Activated CD8-positive, alpha-beta T cell treated with anti-CD3 and anti-CD28 coated beads for 36 hours (primary cell): ENCODE measurements at regions of chr19 and their contacts with region 1.

Region 1: DNA sequence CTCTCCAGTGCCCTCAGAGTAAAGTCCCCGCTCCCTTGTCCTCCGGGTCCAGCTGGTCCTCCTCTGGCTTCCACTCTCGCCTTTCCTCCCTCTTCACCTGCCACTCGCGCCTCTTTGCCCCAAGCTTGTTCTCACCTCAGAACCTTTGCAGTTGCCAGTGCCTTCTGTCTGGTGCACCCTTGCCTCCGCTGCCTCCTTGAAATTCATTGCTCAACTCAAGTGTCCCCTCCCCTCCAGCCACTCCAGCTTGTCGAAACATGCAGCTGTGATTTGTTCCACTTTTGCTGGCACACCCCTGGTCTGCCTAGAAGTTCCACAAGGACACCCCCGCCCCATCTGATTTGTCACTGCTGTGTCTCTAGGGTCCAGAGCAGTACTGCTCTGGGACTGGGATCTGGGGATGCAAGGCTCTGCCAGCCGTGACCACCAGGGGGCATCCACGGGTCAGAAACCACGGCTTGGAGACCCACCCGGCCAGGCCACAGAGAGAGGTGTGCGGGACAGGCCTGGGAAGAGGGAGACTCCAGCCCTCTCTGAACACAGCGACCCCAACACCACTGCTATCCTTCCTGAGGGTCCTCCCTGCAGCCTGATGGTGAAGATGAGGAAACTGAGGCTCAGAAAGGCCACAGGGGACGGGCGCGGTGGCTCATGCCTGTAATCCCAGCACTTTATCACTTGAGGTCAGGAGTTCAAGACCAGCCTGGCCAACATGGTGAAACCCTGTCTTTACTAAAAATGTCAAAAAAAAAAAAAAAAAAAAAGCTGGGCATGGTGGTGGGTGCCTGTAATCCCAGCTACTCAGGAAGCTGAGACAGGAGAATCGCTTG is 49.9 kb downstream of the AP1M1 start:
- DNase-seq: peak; percentile 88
- ATAC-seq: peak; percentile 93
- H3K4me3 Mint-ChIP-seq: no peak overlapping the region
- H3K27ac Mint-ChIP-seq: no peak overlapping the region
- H3K4me1 Mint-ChIP-seq: peaks cover 15% of the 10 kb centered on the region
- H3K27me3 Mint-ChIP-seq: no peaks in the 10 kb centered on the region
- CTCF ChIP-seq: peak; percentile 93

Region 2: DNA sequence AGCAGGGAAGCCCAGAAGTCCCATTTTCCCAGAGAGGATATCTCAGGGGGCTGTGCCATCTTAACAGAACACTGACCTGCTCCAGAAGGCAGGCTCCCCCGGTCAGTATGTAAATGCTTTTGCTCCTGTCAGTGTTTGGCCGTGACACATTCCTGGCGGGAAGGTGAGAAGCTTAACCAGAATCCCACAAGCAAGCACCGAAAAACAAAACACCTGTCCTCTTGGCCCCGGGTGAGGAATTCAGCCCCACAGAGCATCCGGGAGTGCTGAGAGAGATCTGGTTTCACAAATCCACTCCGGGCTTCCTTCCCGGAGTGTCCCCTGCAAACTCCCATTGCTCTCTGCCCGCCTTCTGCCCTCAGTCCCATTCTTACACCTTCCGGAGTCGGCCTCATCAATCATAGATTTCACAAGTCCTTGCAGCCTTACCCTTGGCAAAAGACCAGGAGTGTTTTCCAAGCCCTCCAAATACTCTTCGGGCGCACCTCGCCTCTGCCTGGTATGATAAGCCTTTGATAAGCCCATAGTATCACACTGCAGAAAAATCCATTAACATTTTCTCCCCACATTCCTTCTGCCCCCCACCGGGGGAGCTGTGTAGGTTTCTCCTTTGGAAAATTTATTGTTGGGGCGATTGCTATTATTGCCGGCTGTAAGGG is 159.1 kb before region 1 on chr19:
- CTCF ChIA-PET with region 1: no interaction called
- POLR2A ChIA-PET with region 1: no interaction called
- intact Hi-C with region 1: no loop called
- DNase-seq: no peak
- ATAC-seq: no peak
- H3K4me3 Mint-ChIP-seq: no peak overlapping the region
- H3K27ac Mint-ChIP-seq: no peak overlapping the region
- H3K4me1 Mint-ChIP-seq: peaks cover 32% of the 10 kb centered on the region
- H3K27me3 Mint-ChIP-seq: no peaks in the 10 kb centered on the region
- CTCF ChIP-seq: no peak

Region 3: DNA sequence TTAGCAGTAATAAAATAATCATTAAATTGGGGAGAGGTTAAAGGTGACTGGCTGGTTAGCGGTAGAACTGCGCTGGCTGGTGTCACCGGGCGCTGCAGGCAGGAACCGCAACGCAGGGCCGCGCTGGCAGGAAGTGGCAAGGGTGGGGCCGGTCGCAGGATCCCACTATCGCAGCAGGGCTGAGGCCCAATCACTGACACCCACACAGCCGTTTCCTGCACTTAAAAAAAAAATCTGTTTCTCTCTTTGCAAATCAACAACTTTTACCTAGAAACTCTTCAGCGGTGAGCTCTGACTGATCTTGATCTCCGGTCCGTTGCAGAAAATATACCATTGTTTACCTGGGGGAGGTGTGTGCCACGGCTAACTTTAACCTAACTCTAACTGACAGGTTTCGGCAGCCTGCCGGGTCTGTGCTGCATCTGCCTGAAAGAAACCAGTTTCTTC is 124.0 kb after region 1 on chr19:
- CTCF ChIA-PET with region 1: interaction called, 10 read pairs
- POLR2A ChIA-PET with region 1: no interaction called
- intact Hi-C with region 1: no loop called
- DNase-seq: peak; percentile 95
- ATAC-seq: peak; percentile 79
- H3K4me3 Mint-ChIP-seq: peak overlapping the region; percentile 3
- H3K27ac Mint-ChIP-seq: peak overlapping the region; percentile 54
- H3K4me1 Mint-ChIP-seq: peaks cover 42% of the 10 kb centered on the region
- H3K27me3 Mint-ChIP-seq: peaks cover 11% of the 10 kb centered on the region
- CTCF ChIP-seq: no peak